ENCODE measurements at regions of chr1 and their contacts with region 1.

Region 1: GRCh38 chr1:27662707-27663393 is 9.1 kb downstream of the IFI6 start:
- DNase-seq: peak; percentile 93
- ATAC-seq: peak; percentile 80
- H3K4me3 Mint-ChIP-seq: peak overlapping the region; percentile 68
- H3K27ac Mint-ChIP-seq: peak overlapping the region; percentile 100
- H3K4me1 Mint-ChIP-seq: peaks cover 72% of the 10 kb centered on the region
- H3K27me3 Mint-ChIP-seq: no peaks in the 10 kb centered on the region

Region 2: GRCh38 chr1:27473755-27474154 is 189.1 kb before region 1 on chr1:
- CTCF ChIA-PET with region 1: no interaction called
- DNase-seq: no peak
- ATAC-seq: no peak
- H3K4me3 Mint-ChIP-seq: no peak overlapping the region
- H3K27ac Mint-ChIP-seq: no peak overlapping the region
- H3K4me1 Mint-ChIP-seq: peaks cover 50% of the 10 kb centered on the region
- H3K27me3 Mint-ChIP-seq: no peaks in the 10 kb centered on the region

Region 3: DNA sequence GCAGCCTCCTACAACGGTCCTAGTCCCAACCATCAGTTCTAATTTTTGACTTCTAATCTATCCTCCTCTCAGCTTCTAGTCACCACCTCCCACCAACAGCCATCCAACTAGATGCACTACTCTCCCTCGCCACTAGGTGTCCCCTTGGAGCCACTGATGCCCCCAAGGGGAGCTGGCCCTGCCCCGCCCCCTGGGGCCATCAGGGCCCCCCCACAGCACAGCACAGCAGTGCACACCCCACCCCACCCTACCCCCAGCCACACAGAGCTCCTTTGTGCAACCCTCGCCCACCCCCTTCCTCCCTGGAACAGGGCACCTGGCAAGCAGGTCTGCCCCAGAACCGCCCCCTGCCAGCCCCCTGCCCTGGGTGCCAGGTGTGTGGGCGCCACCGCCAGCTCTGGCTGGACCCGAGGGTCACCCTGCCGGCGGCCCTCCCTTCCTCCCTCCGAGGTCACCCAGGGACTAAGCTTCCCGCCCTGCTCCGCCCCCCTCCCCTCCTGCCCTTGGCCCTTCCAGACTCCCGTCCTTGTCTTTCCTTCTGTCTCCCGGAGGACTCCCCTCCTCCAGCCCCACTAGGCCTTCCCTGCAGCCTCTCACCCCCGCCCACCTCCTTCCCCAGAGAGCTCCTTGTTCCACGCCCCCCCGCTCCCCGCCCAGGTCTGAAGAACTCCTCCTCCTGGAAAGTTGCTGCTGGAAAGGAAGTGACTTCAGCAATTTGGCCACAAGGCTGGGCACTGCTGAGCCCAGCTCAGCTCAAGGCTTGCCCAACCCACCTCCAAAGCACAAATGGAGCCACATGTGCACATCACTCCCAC is 105.9 kb before region 1 on chr1:
- CTCF ChIA-PET with region 1: interaction called, 40 read pairs
- DNase-seq: peak; percentile 87
- ATAC-seq: peak; percentile 82
- H3K4me3 Mint-ChIP-seq: no peak overlapping the region
- H3K27ac Mint-ChIP-seq: peak overlapping the region; percentile 84
- H3K4me1 Mint-ChIP-seq: peaks cover 27% of the 10 kb centered on the region
- H3K27me3 Mint-ChIP-seq: no peaks in the 10 kb centered on the region

Region 4: DNA sequence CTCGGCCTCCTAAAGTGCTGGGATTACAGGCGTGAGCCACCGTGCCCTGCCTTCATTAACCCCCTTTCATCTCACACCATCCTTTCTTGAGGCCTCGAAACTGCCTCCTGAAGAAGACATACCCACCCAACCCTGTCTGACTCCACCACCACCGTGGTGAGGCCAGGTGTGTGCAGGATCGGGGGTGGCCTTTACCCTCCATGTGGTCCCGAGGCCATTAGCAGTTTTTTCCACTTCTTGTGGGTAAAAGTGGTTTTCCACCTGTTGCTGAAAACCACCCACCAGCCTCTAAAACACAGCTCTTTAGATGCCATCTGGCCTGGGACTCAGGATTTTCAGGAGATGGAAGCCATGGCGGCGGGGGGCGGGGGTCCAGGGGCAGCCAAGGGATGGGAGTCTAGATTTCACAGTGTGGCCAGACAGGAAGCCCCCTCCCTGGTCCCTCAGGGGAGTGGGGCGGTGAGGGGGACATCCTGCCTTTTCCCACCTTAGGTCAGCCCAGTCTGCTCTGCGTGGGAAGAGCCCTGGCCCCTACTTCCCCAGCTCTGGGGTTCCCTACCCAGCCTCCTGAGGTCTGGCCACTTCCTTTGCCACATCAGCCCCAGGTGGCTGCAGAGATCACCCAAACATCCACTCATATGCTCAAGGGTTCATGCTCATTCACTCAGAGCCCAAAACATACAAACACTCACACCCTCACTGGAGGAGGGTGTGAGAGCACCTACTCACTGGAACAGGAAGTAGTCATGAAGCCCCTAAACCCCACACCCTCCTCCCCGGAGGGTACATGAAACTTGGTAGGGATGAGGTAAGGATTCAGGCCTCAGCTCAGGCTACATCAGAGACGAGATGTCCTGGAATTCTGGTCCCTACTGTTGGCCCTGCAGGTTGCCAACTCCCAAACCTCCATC is 30.2 kb before region 1 on chr1:
- CTCF ChIA-PET with region 1: interaction called, 32 read pairs
- DNase-seq: peak; percentile 85
- ATAC-seq: peak; percentile 74
- H3K4me3 Mint-ChIP-seq: peak overlapping the region; percentile 37
- H3K27ac Mint-ChIP-seq: peak overlapping the region; percentile 82
- H3K4me1 Mint-ChIP-seq: peaks cover 71% of the 10 kb centered on the region
- H3K27me3 Mint-ChIP-seq: peaks cover 9% of the 10 kb centered on the region

Region 5: GRCh38 chr1:27643701-27644625 is 18.9 kb before region 1 on chr1:
- CTCF ChIA-PET with region 1: interaction called, 21 read pairs
- DNase-seq: peak; percentile 78
- ATAC-seq: peak; percentile 95
- H3K4me3 Mint-ChIP-seq: no peak overlapping the region
- H3K27ac Mint-ChIP-seq: no peak overlapping the region
- H3K4me1 Mint-ChIP-seq: peaks cover 14% of the 10 kb centered on the region
- H3K27me3 Mint-ChIP-seq: no peaks in the 10 kb centered on the region

Region 6: GRCh38 chr1:27682351-27682944 is 19.6 kb after region 1 on chr1:
- CTCF ChIA-PET with region 1: no interaction called
- DNase-seq: no peak
- ATAC-seq: no peak
- H3K4me3 Mint-ChIP-seq: no peak overlapping the region
- H3K27ac Mint-ChIP-seq: no peak overlapping the region
- H3K4me1 Mint-ChIP-seq: no peaks in the 10 kb centered on the region
- H3K27me3 Mint-ChIP-seq: peaks cover 8% of the 10 kb centered on the region

Region 7: GRCh38 chr1:27725374-27726173 is 62.7 kb after region 1 on chr1 and contains the start of gene FAM76A:
- CTCF ChIA-PET with region 1: interaction called, 12 read pairs
- DNase-seq: peak; percentile 100
- ATAC-seq: peak; percentile 93
- H3K4me3 Mint-ChIP-seq: peak within 1 kb of the TSS; percentile 84
- H3K27ac Mint-ChIP-seq: peak within 1 kb of the TSS; percentile 93
- H3K4me1 Mint-ChIP-seq: peaks cover 20% of the 10 kb centered on the region
- H3K27me3 Mint-ChIP-seq: peaks cover 2% of the 10 kb centered on the region
- total RNA-seq, gene FAM76A: 11.8 to 13.2 TPM